OCI-LY7 (cell line): ENCODE measurements at regions of chr19 and their contacts with region 1.

Region 1: GRCh38 chr19:18281082-18282020 is at the start of gene JUND:
- DNase-seq: peak; percentile 98
- H3K4me3 ChIP-seq: peak within 1 kb of the TSS; percentile 80
- H3K27ac ChIP-seq: peak within 1 kb of the TSS; percentile 89
- H3K4me1 ChIP-seq: peaks cover 28% of the 10 kb centered on the region
- CTCF ChIP-seq: peak; percentile 35; the same call in 1 of the 2 replicates
- total RNA-seq, gene JUND: 138 and 144 TPM in 2 replicates

Region 2: DNA sequence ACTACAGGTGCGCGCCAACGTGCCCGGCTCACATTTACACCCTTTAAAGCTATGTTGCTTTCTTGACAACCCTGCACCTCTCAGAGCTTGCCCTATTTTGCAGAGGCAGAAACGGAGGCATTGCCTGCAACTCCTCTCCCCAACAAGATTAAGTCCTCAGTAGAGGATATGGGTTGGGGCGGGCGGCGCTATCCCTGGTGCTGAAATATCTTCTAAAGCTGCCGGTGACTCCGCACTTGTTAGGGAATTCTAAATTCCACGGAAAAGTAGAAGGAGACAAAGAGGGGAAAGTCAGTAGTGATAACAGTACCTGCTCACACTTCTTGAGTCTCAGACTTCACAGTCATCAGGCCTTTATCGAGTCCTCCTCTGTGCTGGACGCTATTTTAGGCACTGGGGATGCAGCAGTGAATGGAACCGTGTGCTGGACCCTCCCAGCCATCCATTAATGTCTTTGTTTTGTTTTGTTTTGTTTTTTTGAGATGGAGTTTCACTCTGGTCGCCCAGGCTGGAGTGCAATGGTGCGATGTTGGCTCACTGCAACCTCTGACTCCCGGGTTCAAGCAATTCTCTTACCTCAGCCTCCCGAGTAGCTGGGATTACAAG is 391.6 kb before region 1 on chr19:
- CTCF ChIA-PET with region 1: no interaction called
- POLR2A ChIA-PET with region 1: no interaction called
- intact Hi-C with region 1: no loop called
- DNase-seq: no peak
- H3K4me3 ChIP-seq: no peak overlapping the region
- H3K27ac ChIP-seq: no peak overlapping the region
- H3K4me1 ChIP-seq: peaks cover 25% of the 10 kb centered on the region
- CTCF ChIP-seq: no peak

Region 3: GRCh38 chr19:17966550-17967256 is 314.6 kb before region 1 on chr19 and contains the start of gene KCNN1:
- CTCF ChIA-PET with region 1: no interaction called
- POLR2A ChIA-PET with region 1: no interaction called
- intact Hi-C with region 1: no loop called
- DNase-seq: peak; percentile 26
- H3K4me3 ChIP-seq: no peak within 1 kb of the TSS
- H3K27ac ChIP-seq: no peak within 1 kb of the TSS
- H3K4me1 ChIP-seq: no peaks in the 10 kb centered on the region
- CTCF ChIP-seq: no peak
- total RNA-seq, gene KCNN1: 0.51 and 1.1 TPM in 2 replicates

Region 4: GRCh38 chr19:18291590-18292461 is 10.5 kb after region 1 on chr19:
- CTCF ChIA-PET with region 1: interaction called, 4 read pairs
- POLR2A ChIA-PET with region 1: interaction called, 38 read pairs
- intact Hi-C with region 1: loop called (anchors 1 kb)
- DNase-seq: peak; percentile 81
- H3K4me3 ChIP-seq: peak overlapping the region; percentile 73
- H3K27ac ChIP-seq: peak overlapping the region; percentile 59
- H3K4me1 ChIP-seq: peaks cover 57% of the 10 kb centered on the region
- CTCF ChIP-seq: no peak

Region 5: DNA sequence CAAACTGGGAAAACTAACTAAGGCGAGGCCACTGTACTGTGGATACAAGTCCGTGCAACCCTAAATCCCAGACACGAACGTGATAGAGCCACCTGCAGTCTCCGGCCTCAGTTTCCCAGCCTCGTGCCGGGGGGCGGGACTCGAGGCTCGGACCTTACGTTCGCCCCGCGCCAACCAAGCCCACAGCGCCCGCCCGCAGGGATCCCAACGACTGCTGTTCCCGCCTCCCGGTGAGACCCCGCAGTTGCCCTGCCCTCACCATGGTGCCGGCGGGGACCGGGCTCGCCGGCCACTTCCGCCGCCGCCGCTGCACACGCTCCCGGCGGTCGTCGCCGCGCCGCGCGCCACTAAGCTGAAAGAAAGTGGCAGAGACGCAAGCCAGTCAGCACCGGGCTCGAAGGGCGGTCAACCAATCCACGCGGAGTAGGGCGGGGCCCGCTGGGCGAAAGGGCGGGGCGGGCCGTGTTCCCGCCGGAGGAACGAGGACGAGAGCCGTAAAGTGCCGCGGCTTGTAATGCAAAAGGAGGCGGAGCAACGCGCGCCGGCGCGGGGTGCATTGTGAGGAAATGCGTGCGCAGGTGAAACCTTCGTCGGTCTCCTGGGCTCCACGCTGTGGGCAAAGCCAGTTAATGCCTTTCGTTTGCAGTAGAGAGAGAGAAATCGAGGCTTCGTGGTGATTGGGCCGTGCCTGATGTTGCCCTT is 41.6 kb after region 1 on chr19 and contains the start of gene LSM4:
- CTCF ChIA-PET with region 1: interaction called, 22 read pairs
- POLR2A ChIA-PET with region 1: interaction called, 44 read pairs
- intact Hi-C with region 1: loop called (anchors 1 kb)
- DNase-seq: peak; percentile 100
- H3K4me3 ChIP-seq: peak within 1 kb of the TSS; percentile 89
- H3K27ac ChIP-seq: peak within 1 kb of the TSS; percentile 90
- H3K4me1 ChIP-seq: peaks cover 46% of the 10 kb centered on the region
- CTCF ChIP-seq: peak; percentile 65
- total RNA-seq, gene LSM4: 451 and 482 TPM in 2 replicates

Region 6: GRCh38 chr19:18340190-18340989 is 59.0 kb after region 1 on chr19 and contains the start of gene PGPEP1:
- CTCF ChIA-PET with region 1: interaction called, 5 read pairs
- POLR2A ChIA-PET with region 1: interaction called, 13 read pairs
- intact Hi-C with region 1: no loop called
- DNase-seq: peak; percentile 81
- H3K4me3 ChIP-seq: peak within 1 kb of the TSS; percentile 88
- H3K27ac ChIP-seq: peak within 1 kb of the TSS; percentile 56
- H3K4me1 ChIP-seq: peaks cover 25% of the 10 kb centered on the region
- CTCF ChIP-seq: no peak
- total RNA-seq, gene PGPEP1: 15.2 and 18.9 TPM in 2 replicates

Region 7: DNA sequence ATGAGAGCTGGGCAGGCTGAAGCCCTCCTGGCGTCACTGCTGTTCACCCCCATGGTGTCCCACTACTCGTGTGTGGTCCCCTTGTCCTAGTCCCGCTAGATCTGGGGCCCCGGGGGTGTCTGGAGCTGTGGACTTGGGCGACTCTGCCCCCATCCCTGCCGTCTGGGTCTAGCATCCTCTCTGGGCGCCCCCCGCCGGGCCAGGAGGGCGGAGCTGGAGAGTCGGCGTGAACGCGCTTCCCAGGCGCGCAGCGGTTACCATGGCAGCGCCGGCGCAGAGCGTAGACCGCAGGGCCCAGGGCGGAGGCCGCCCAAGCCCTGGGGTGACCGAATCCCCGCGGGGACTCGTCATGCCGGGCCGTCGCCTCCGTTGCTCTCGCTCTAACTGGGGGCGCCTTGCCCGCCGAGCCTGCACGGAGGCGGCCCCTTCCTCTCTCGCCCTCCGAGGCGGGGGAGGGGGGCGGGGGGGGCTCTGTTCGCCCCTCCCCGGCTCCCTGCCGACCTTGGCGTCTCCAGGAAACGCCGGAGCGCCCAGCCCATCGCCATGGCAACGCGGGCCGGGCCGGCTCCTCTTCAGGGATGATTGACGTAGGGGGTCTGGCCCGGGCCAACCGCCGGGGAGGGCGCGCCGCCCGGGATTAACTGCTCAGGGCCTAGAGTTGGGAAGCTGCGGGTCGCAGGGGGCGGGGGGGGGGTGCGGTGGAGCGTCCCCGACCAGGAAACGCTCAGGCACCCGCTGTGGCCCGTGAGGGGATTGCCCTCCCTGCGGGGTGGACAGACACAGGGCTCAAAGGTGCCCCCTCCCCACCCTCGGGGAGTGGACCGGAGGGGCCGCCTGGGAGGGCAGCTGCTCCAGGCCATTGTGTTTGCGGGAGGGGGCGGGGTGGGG is 147.7 kb after region 1 on chr19:
- CTCF ChIA-PET with region 1: no interaction called
- POLR2A ChIA-PET with region 1: no interaction called
- intact Hi-C with region 1: no loop called
- DNase-seq: peak; percentile 83
- H3K4me3 ChIP-seq: peak overlapping the region; percentile 41
- H3K27ac ChIP-seq: peak overlapping the region; percentile 37
- H3K4me1 ChIP-seq: peaks cover 53% of the 10 kb centered on the region
- CTCF ChIP-seq: 0 out of 2 replicates have a peak, but pooled peaks have one; percentile 29